H1 (cell line): ENCODE measurements at regions of chr18 and their contacts with region 1.

Region 1: GRCh38 chr18:46281185-46282176 is 177.3 kb downstream of the HAUS1 start:
- DNase-seq: peak; percentile 50 to 88
- H3K4me3 ChIP-seq: no peak overlapping the region
- H3K27ac ChIP-seq: no peak overlapping the region
- H3K4me1 ChIP-seq: peaks cover 6 to 9% (median 7%) of the 10 kb centered on the region in 4 experiments; a peak in 6 of 7 replicates
- H3K27me3 ChIP-seq: no peaks in the 10 kb centered on the region
- CTCF ChIP-seq: peak; percentile 76 to 95 (median 94)
- EP300 ChIP-seq: no peak
- POLR2A ChIP-seq: no peak
- RAD21 ChIP-seq: peak; percentile 92 to 93

Region 2: DNA sequence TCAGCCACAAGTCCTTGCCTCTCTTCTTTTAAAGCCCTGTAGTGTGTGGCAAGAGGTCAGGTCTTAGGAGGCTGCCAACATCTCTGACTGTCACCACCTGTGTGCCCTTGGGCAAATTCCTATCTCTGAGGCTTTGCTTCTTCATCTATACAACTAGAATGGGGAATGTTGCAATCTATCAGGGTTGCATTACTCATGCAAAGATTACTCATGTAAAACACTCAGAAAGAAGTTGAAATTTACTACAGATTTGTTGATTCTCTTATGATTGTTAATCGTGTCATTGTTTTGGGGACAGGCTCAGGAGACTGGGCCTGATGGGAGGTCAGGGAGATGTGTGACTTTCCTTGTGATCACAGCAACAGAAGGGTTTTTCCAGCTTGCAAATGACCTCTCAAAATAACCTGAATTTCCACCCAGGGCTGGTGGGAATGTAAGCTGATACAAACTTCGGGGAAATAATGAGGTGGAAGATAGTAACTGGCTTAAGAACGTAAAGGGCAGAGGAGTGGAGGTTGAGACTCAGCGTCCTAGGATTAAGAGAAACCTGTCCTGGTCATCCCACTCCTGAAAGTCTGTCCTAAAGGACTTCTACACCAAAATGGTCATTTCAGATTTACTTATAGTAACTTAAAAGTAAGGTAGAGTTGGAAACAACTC is 488.0 kb before region 1 on chr18:
- CTCF ChIA-PET with region 1: no interaction called
- POLR2A ChIA-PET with region 1: no interaction called
- DNase-seq: no peak
- H3K4me3 ChIP-seq: no peak overlapping the region
- H3K27ac ChIP-seq: no peak overlapping the region
- H3K4me1 ChIP-seq: peaks cover 0 to 6% (median 0%) of the 10 kb centered on the region in 4 experiments; a peak in 1 of 7 replicates
- H3K27me3 ChIP-seq: no peaks in the 10 kb centered on the region
- CTCF ChIP-seq: no peak
- EP300 ChIP-seq: no peak
- POLR2A ChIP-seq: no peak
- RAD21 ChIP-seq: no peak

Region 3: GRCh38 chr18:46173393-46174341 is 107.8 kb before region 1 on chr18:
- CTCF ChIA-PET with region 1: interaction called, 18 read pairs
- POLR2A ChIA-PET with region 1: interaction called, 3 read pairs
- DNase-seq: peak; percentile 92 to 98
- H3K4me3 ChIP-seq: peak overlapping the region; percentile 71 to 91 (median 81)
- H3K27ac ChIP-seq: peak overlapping the region; percentile 88
- H3K4me1 ChIP-seq: peaks cover 0 to 2% (median 0%) of the 10 kb centered on the region in 4 experiments; a peak in 1 of 7 replicates
- H3K27me3 ChIP-seq: no peaks in the 10 kb centered on the region
- CTCF ChIP-seq: peak; percentile 91 to 94 (median 94)
- EP300 ChIP-seq: no peak
- POLR2A ChIP-seq: peak; percentile 40 to 61
- RAD21 ChIP-seq: peak; percentile 68 to 72

Region 4: DNA sequence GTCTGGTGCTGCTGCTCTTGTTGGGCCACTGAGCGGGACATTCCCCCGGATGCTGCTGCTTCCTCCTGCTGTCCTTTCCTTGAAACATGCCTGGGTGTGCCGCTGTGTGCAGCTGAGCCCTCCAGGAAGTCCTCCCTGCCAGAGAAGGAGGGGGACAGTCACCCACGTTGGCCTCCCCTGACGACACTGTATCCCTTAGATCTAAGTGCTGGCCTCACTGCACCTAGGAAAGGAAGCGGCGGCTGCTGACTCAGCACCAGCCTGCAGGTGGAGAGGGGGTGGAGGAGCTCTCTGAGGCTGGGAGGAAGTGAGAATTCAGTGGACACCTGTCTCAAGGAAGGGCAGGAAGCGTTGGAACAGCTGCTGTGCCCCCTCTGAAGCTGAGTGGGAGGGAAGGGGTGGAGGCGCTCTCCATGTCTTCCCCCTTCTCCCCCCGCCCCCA is 62.5 kb after region 1 on chr18:
- CTCF ChIA-PET with region 1: interaction called, 196 read pairs
- POLR2A ChIA-PET with region 1: no interaction called
- DNase-seq: peak in 1 of 2 experiments; percentile 61
- H3K4me3 ChIP-seq: no peak overlapping the region
- H3K27ac ChIP-seq: no peak overlapping the region
- H3K4me1 ChIP-seq: peaks cover 5 to 20% (median 13%) of the 10 kb centered on the region in 4 experiments
- H3K27me3 ChIP-seq: no peaks in the 10 kb centered on the region
- CTCF ChIP-seq: peak; percentile 17 to 35 (median 18); a peak in 3 of 4 replicates
- EP300 ChIP-seq: no peak
- POLR2A ChIP-seq: no peak
- RAD21 ChIP-seq: peak in 1 of 2 experiments; percentile 13; a peak in 1 of 4 replicates

Region 5: GRCh38 chr18:46402396-46402795 is 120.9 kb after region 1 on chr18:
- CTCF ChIA-PET with region 1: interaction called, 26 read pairs
- POLR2A ChIA-PET with region 1: no interaction called
- DNase-seq: no peak
- H3K4me3 ChIP-seq: no peak overlapping the region
- H3K27ac ChIP-seq: no peak overlapping the region
- H3K4me1 ChIP-seq: no peaks in the 10 kb centered on the region; a peak in 1 of 7 replicates
- H3K27me3 ChIP-seq: no peaks in the 10 kb centered on the region; a peak in 1 of 7 replicates
- CTCF ChIP-seq: no peak
- EP300 ChIP-seq: no peak
- POLR2A ChIP-seq: no peak
- RAD21 ChIP-seq: no peak

Region 6: GRCh38 chr18:46481048-46481846 is 199.8 kb after region 1 on chr18:
- CTCF ChIA-PET with region 1: interaction called, 66 read pairs
- POLR2A ChIA-PET with region 1: no interaction called
- DNase-seq: peak in 1 of 2 experiments; percentile 87
- H3K4me3 ChIP-seq: no peak overlapping the region
- H3K27ac ChIP-seq: no peak overlapping the region
- H3K4me1 ChIP-seq: peaks cover 5 to 15% (median 10%) of the 10 kb centered on the region in 4 experiments; a peak in 6 of 7 replicates
- H3K27me3 ChIP-seq: 0 out of 7 replicates have a peak, but pooled peaks cover 0 to 3% (median 0%) of the 10 kb centered on the region in 4 experiments
- CTCF ChIP-seq: peak; percentile 53 to 84 (median 83)
- EP300 ChIP-seq: no peak
- POLR2A ChIP-seq: no peak
- RAD21 ChIP-seq: peak; percentile 62 to 80

Region 7: GRCh38 chr18:46555724-46556123 is 274.2 kb after region 1 on chr18:
- CTCF ChIA-PET with region 1: interaction called, 20 read pairs
- POLR2A ChIA-PET with region 1: no interaction called
- DNase-seq: peak; percentile 21 to 76
- H3K4me3 ChIP-seq: no peak overlapping the region
- H3K27ac ChIP-seq: no peak overlapping the region
- H3K4me1 ChIP-seq: peaks cover 0 to 3% (median 0%) of the 10 kb centered on the region in 4 experiments; a peak in 1 of 7 replicates
- H3K27me3 ChIP-seq: no peaks in the 10 kb centered on the region
- CTCF ChIP-seq: peak; percentile 85 to 88 (median 88)
- EP300 ChIP-seq: no peak
- POLR2A ChIP-seq: no peak
- RAD21 ChIP-seq: peak; percentile 88 to 91